Endothelial cell of umbilical vein (primary cell): ENCODE measurements at regions of chr6 and their contacts with region 1.

Region 1: DNA sequence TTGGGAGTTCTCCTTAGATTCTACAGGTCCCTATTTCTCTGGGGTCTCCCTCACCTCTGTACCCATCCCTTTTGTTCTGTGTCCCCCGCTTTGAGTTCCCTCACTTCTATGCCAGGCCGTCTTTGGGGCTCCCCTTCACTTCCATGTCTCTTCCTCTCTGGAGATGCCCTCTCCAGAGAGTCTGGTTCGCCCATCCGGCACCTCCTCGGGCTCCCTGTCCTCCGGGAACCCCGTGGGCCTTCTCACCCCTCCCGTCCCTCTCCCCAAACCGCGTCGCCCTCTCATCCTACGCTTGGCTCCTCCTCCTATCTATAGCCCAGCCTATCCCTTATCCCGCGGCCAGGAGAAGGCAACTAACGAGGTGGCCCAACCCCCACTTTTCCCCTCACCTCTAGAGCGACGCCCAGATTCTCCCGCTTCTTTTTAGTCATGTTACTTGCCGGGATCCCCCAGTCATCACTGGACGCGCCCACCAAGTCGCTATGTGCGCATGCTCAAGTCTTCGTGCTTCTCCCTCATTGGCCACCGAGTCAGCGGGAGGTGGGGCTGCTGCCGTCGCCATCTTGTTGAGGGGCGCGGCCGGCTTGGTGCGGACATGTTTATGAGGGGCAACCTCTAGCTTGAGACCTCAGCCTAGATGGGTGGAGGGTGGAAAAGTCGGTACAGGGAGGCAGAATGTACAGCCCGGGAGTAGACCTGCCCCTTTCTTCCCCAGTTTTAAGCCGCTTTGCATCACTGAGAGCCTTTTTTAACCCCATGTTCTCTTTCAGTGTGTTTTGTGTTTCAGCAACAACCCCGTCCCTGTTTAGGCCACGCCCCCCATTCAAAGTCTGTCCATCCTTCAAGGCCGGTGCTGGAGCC is at the start of gene CCDC167:
- DNase-seq: peak; percentile 99
- H3K4me3 ChIP-seq: peak within 1 kb of the TSS; percentile 59 to 83 (median 74)
- H3K27ac ChIP-seq: peak within 1 kb of the TSS; percentile 62
- H3K4me1 ChIP-seq: peaks cover 7% of the 10 kb centered on the region
- H3K27me3 ChIP-seq: peaks cover 6 to 11% of the 10 kb centered on the region in 2 experiments
- CTCF ChIP-seq: no peak
- POLR2A ChIP-seq: no peak
- total RNA-seq, gene CCDC167: 46.6 and 52.7 TPM in 2 replicates

Region 2: DNA sequence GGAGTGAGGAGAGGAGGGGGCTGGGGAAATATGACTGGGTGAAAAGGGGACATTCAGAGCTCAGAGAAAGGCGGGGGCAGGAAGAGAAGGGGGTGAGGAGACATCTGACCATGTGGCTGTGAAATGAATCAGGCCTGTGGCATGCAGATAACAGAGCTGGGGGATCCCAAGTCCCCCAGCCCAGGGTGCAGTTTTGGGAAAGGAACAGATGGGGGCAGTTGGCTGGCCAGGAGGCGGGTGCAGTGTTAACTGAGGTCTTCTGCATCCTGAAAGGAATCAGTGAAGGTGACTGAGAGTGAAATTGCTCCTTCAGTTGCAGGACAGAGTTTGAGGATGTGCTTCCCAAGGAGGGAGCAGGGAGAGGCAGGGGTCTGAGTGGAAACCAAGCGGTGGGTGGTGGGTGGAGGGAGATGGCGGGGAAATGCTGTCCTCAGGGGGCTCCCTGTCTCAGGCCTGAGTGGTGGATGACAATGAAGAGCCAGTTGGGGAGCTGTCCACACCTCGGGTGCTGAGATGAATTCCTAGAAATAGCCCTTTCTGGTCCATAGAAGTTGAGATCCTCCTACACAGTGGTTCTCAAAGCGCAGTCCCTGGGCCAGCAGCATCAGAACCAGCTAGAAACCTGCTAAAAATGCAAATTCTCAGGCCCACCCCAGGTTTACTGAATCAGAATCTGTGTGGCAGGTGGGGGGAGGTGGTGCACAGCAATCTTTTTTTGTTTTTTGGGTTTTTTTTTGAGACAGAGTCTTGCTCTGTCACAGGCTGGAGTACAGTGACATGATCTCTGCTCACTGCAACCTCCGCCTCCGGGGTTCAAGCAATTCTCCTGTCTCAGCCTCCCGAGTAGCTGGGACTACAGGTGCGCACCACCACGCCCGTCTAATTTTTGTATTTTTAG is 26.0 kb after region 1 on chr6:
- CTCF ChIA-PET with region 1: interaction called, 3 read pairs
- POLR2A ChIA-PET with region 1: no interaction called
- dilution Hi-C with region 1: no loop called
- intact Hi-C with region 1: loop called (anchors 1 kb)
- DNase-seq: peak; percentile 30
- H3K4me3 ChIP-seq: no peak overlapping the region
- H3K27ac ChIP-seq: no peak overlapping the region
- H3K4me1 ChIP-seq: peaks cover 23% of the 10 kb centered on the region
- H3K27me3 ChIP-seq: peaks cover 5 to 16% of the 10 kb centered on the region in 2 experiments
- CTCF ChIP-seq: no peak
- POLR2A ChIP-seq: no peak